ENCODE measurements at regions of chr6 and their contacts with region 1.

Region 1: DNA sequence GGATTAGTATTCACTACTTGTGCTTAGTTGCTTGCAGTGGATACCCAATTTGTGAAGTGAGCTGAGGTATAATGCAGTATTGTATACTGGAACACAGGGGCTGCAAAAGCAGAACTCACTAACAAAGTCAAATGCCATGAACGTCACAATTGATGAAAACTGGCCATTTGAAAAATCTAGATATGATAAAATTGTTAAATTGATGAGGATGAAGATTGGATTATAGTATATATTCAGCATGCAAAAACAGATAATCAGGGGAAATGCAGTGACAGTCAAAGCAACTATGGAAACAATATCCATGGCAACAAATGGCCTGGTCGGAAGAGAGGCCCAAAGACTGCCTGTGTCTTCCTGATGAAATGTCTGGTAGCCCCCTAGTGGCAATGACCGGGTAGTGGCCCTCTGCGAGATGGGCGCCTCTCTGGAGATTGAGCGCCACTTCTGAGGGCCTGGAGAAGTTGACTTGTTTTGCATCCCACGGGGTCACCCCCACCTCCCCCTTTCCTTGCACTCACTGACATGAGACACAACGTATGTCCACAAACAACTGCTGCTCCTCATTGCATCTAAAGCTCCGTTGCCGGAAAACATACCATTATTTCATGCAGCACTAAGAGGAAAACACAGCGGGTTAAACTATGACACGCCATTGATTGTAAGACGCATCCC is 43.6 kb downstream of the C6orf15 start:
- DNase-seq: no peak
- H3K4me3 ChIP-seq: no peak overlapping the region
- CTCF ChIP-seq: peak; percentile 93

Region 2: GRCh38 chr6:30821862-30822782 is 246.7 kb before region 1 on chr6:
- CTCF ChIA-PET with region 1: interaction called, 55 read pairs
- POLR2A ChIA-PET with region 1: no interaction called
- DNase-seq: no peak
- H3K4me3 ChIP-seq: no peak overlapping the region
- CTCF ChIP-seq: peak; percentile 33

Region 3: DNA sequence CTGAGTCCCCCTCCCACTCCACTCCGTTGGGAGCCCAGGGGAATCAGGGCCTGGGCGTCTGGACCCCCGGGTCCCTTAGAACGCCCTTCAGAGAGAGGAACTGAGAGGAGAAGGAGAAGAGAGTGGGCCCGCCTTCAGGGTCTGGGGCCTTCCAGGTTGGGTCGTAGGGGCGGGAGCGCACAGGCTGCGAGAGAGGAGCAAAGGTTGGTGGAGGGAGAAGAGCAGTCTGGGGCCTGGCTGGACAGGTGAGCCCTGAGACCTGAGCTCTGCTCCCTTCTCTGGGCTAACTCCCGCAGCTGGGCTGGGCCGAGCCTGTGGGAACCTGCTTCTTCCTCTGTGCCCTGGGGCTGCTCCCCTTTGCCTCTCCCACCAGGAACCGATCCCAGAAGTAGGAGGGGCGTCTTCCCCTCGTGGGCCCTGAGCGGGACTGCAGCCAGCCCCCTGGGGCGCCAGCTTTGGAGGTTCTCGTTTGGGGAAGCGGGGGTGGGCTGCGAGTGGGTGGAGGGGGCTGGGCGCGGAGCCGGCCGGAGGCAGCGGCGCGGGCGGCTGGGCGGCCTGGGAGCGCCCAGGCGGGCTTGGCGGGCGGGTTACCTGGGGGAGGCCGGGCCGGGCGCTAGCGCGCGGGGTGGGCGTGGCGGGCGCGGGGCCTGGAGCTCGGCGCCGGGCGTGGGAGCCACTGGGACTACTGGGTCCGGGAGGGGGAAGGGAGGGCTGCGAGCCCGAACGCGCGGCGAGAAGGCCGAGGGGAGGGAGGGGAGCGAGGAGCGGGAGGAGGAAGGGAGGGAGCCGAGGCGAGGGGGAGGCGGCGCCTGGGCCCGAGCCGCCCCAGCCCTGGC is 184.9 kb before region 1 on chr6 and contains the start of gene DDR1:
- CTCF ChIA-PET with region 1: interaction called, 14 read pairs
- POLR2A ChIA-PET with region 1: no interaction called
- DNase-seq: no peak
- H3K4me3 ChIP-seq: peak within 1 kb of the TSS; percentile 82
- CTCF ChIP-seq: no peak

Region 4: GRCh38 chr6:30942338-30943060 is 126.3 kb before region 1 on chr6:
- CTCF ChIA-PET with region 1: interaction called, 104 read pairs
- POLR2A ChIA-PET with region 1: no interaction called
- DNase-seq: peak; percentile 17
- H3K4me3 ChIP-seq: no peak overlapping the region
- CTCF ChIP-seq: peak; percentile 77

Region 5: DNA sequence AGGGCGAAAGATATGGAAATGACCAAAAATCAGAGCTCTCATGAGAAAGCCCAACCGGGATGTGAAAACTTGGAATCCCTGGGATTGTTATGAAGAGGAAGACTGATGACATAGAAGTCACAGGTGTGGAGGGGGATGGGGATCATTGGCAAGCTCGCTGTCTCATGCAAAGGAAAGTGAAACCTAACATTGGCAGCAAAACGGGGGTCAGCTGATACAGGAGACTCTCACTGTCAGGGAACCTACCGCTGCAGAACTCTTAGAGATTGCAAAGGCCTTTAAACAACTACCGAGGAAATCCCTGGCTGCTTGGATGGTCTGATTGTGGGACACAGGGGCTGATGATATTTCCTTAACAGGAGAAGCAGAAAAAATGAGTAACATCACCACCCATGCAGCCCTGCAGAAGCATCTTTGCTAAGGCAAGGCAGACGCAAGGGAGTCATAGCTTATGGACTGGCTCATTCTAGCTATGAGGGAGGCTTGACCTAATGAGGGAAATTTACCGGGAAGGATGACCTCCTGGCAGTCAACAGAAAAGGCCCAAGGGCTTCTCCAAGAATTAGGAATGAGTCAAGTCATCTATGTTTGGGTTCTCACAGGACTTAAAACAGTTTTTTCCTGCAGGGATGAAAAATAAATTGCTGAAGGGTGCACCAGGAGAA is 78.3 kb before region 1 on chr6:
- CTCF ChIA-PET with region 1: no interaction called
- POLR2A ChIA-PET with region 1: no interaction called
- DNase-seq: no peak
- H3K4me3 ChIP-seq: no peak overlapping the region
- CTCF ChIP-seq: no peak

Region 6: GRCh38 chr6:31042806-31043205 is 26.0 kb before region 1 on chr6:
- CTCF ChIA-PET with region 1: interaction called, 45 read pairs
- POLR2A ChIA-PET with region 1: no interaction called
- DNase-seq: no peak
- H3K4me3 ChIP-seq: no peak overlapping the region
- CTCF ChIP-seq: peak; percentile 77

Region 7: GRCh38 chr6:31087494-31088089 is 18.8 kb after region 1 on chr6:
- CTCF ChIA-PET with region 1: interaction called, 101 read pairs
- POLR2A ChIA-PET with region 1: no interaction called
- DNase-seq: peak; percentile 23
- H3K4me3 ChIP-seq: no peak overlapping the region
- CTCF ChIP-seq: peak; percentile 77

Region 8: GRCh38 chr6:31239854-31240253 is 171.0 kb after region 1 on chr6:
- CTCF ChIA-PET with region 1: no interaction called
- POLR2A ChIA-PET with region 1: no interaction called
- DNase-seq: no peak
- H3K4me3 ChIP-seq: no peak overlapping the region
- CTCF ChIP-seq: no peak

Measured in AG04449 (cell line).